ENCODE measurements at regions of chr1 and their contacts with region 1.

Region 1: GRCh38 chr1:25204797-25205480 is 27.4 kb downstream of the SYF2 start:
- DNase-seq: peak; percentile 59
- H3K4me3 ChIP-seq: no peak overlapping the region
- CTCF ChIP-seq: peak; percentile 50

Region 2: DNA sequence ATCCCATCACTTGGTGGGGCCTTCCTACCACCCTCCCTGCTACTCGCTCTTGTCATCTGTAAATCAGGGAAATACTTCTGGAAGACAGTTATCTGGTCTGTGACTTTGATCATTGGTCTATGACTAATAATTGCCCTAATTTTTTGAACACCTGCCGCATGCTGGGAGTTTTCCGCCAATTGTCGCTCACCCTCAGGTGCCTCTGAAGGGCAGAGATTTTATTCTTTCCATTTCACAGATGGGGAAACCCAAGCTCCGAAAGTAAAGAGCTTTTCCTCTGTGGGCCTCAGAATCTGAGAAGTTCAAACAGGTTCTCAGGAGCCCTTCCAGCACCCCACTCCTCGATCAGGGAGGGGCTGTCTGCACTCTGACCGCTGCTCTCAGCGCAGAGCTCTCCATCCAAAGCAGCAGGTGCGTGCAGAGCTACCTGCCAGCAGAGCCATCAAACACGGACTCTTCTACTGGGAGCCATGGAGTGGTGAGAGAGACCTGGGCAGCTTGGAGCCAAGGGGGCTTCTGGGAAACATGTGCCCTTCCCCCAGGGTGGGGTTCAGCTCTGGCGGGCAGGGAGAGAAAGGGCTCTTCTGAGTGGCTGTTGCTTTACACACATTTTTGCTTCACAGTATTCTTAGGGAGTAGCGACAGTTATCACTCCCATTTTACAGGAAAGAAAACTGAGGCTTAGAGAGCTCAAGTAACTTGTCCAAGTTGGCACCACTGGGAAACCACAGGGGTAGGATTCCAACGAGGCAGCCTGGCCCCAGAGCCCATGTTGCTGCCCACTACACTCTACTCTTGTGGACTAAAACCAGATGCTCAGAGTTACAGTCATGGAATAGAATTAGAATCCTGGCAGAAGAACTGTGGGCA is 269.1 kb before region 1 on chr1:
- CTCF ChIA-PET with region 1: interaction called, 13 read pairs
- POLR2A ChIA-PET with region 1: no interaction called
- DNase-seq: no peak
- H3K4me3 ChIP-seq: no peak overlapping the region
- CTCF ChIP-seq: no peak

Region 3: GRCh38 chr1:25194572-25195020 is 10.3 kb before region 1 on chr1:
- CTCF ChIA-PET with region 1: interaction called, 20 read pairs
- POLR2A ChIA-PET with region 1: no interaction called
- DNase-seq: no peak
- H3K4me3 ChIP-seq: no peak overlapping the region
- CTCF ChIP-seq: no peak

Region 4: GRCh38 chr1:25223471-25223870 is 18.5 kb after region 1 on chr1:
- CTCF ChIA-PET with region 1: interaction called, 69 read pairs
- POLR2A ChIA-PET with region 1: no interaction called
- DNase-seq: no peak
- H3K4me3 ChIP-seq: no peak overlapping the region
- CTCF ChIP-seq: no peak